ENCODE measurements at regions of chr21 and their contacts with region 1.

Region 1: DNA sequence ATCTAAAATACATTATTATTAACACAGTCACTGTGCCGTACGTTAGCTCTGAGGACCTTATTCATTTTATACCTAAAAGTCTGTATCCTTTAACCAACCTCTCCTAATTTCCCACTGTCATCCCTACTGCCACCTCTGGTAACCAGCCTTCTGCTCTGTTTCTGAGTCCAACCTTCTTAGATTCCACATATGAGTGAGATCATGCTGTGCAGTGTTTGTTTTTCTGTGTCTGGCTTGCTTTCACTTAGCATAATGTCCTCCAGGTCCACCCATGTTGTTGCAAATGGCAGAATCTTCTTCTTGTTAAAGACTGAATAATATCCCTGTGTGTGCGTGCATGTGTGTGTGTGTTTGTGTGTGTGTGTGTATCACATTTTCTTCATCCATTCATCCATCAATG is 64.2 kb downstream of the ETS2 start:
- DNase-seq: no peak
- ATAC-seq: no peak
- H3K4me3 ChIP-seq: no peak overlapping the region
- H3K4me3 Mint-ChIP-seq: no peak overlapping the region
- H3K27ac ChIP-seq: no peak overlapping the region
- H3K27ac Mint-ChIP-seq: no peak overlapping the region
- H3K4me1 ChIP-seq: no peaks in the 10 kb centered on the region
- H3K4me1 Mint-ChIP-seq: no peaks in the 10 kb centered on the region
- H3K27me3 ChIP-seq: peaks cover 0 to 4% of the 10 kb centered on the region in 2 experiments
- H3K27me3 Mint-ChIP-seq: peaks cover 0 to 25% of the 10 kb centered on the region in 2 donors

Region 2: GRCh38 chr21:38709876-38710275 is 160.1 kb before region 1 on chr21:
- CTCF ChIA-PET with region 1: interaction called in 1 of 2 experiments, 12 read pairs
- POLR2A ChIA-PET with region 1: no interaction called
- DNase-seq: no peak
- ATAC-seq: no peak
- H3K4me3 ChIP-seq: no peak overlapping the region
- H3K4me3 Mint-ChIP-seq: no peak overlapping the region
- H3K27ac ChIP-seq: no peak overlapping the region
- H3K27ac Mint-ChIP-seq: no peak overlapping the region
- H3K4me1 ChIP-seq: no peaks in the 10 kb centered on the region
- H3K4me1 Mint-ChIP-seq: no peaks in the 10 kb centered on the region
- H3K27me3 ChIP-seq: no peaks in the 10 kb centered on the region
- H3K27me3 Mint-ChIP-seq: peaks cover 0 to 18% of the 10 kb centered on the region in 2 donors

Region 3: DNA sequence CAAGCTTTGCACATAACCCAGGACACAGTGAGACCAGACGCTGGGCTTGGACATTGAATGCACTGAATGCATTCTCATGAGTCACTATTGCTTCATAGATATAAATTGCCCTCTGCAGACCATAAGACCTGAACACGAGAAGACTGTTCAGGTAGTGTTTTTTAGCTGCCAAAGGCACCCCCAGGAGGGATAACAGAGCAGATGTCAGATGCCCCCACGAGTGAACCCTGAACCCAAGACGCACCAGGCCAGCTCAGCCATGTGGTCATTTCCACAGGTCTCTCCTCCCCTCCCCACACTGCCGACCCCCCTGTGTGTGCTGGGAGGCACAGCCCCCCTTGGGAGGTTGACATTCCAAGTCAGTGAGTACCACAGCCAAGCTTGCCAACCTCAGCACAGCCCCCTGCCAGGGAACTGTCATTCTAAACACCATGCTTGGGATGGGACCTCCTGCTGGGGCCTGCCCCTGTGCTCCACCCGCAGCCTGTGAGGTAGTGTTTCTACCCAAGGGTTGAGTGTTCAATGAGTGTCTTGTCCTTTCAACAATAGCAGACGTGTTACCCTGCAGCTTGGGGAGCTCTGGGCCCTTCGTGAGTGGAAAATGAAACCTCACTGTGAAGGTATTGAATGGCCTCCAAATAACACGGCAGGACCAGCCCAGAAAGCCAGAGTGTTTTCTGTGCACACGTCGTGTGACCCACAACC is 245.1 kb after region 1 on chr21:
- CTCF ChIA-PET with region 1: no interaction called
- POLR2A ChIA-PET with region 1: no interaction called
- DNase-seq: no peak
- ATAC-seq: no peak
- H3K4me3 ChIP-seq: no peak overlapping the region
- H3K4me3 Mint-ChIP-seq: no peak overlapping the region
- H3K27ac ChIP-seq: no peak overlapping the region
- H3K27ac Mint-ChIP-seq: no peak overlapping the region
- H3K4me1 ChIP-seq: no peaks in the 10 kb centered on the region
- H3K4me1 Mint-ChIP-seq: no peaks in the 10 kb centered on the region
- H3K27me3 ChIP-seq: peaks cover 0 to 8% of the 10 kb centered on the region in 2 experiments
- H3K27me3 Mint-ChIP-seq: peaks cover 0 to 2% of the 10 kb centered on the region in 2 donors

Measured in T-cell (primary cell).